Left ventricle myocardium superior (tissue), 1 donor: ENCODE measurements at regions of chr1 and their contacts with region 1.

Region 1: GRCh38 chr1:20742671-20743070 is 10.2 kb upstream of the SH2D5 start:
- DNase-seq: no peak
- ATAC-seq: no peak

Region 2: GRCh38 chr1:20850021-20850420 is 107.3 kb after region 1 on chr1:
- intact Hi-C with region 1: loop called (anchors 5 kb)
- DNase-seq: no peak
- ATAC-seq: no peak